ENCODE measurements at regions of chr12 and their contacts with region 1.

Region 1: GRCh38 chr12:124655698-124656516 is 88.5 kb upstream of the NCOR2 start:
- DNase-seq: peak; percentile 64 to 93 (median 82)

Region 2: DNA sequence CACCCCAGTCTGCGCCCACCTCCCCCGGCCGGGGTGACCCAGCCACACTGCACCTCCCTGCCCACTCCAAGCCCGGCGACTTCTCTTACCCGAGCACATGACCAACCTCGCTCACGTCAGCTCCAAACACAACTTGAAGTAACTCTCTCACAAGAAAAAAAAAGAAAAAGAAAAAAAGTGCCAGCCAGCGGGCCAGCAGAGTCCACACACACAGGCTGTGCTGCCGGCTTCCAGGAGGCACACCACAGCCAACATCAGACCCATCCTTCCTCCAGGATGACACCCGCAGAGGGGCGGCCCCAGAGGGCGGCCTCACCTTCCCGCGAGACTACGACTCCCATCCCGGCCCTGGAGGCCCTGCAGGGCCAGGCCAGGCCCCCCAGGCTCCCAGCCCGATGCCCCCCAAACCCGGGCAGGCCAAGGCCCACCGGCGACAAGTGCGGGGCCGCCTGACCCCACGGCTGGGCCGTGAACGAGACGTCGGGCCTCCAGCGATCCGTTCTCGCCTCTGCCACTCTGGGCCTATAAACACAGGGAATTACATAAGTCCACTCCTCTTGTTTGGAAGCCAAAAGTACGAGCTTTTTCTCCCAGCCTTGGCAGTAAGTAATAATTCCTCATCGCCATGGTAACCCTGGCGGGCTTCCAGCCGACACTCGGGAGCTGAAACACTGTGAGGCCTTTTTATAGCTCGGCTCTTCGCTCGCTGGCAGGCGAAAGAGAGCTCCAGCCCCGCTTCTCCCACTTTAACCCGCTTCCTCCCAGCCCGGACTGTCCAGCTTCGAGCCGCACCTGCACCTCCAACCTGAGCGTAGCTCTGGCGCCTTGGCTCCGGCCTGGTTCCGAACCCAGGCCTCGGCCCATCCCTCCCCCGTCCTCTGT is 137.6 kb before region 1 on chr12:
- intact Hi-C with region 1: loop called (anchors 10 kb)
- DNase-seq: peak; percentile 91 to 99 (median 97)

Measured in head of caudate nucleus (tissue), 42 donors.